Caco-2 (cell line): ENCODE measurements at regions of chr2 and their contacts with region 1.

Region 1: GRCh38 chr2:225002039-225002655 is 40.1 kb downstream of the DOCK10 start:
- DNase-seq: peak in 1 of 2 experiments; percentile 9
- H3K4me3 ChIP-seq: no peak overlapping the region
- H3K4me3 Mint-ChIP-seq: no peak overlapping the region
- H3K27ac Mint-ChIP-seq: no peak overlapping the region
- H3K4me1 ChIP-seq: no peaks in the 10 kb centered on the region
- H3K4me1 Mint-ChIP-seq: no peaks in the 10 kb centered on the region
- H3K27me3 ChIP-seq: no peaks in the 10 kb centered on the region
- H3K27me3 Mint-ChIP-seq: peaks cover 9% of the 10 kb centered on the region
- CTCF ChIP-seq: peak in 1 of 2 experiments; percentile 31

Region 2: GRCh38 chr2:224221455-224221913 is 780.7 kb before region 1 on chr2:
- CTCF ChIA-PET with region 1: no interaction called
- POLR2A ChIA-PET with region 1: no interaction called
- intact Hi-C with region 1: no loop called
- DNase-seq: no peak
- H3K4me3 ChIP-seq: no peak overlapping the region
- H3K4me3 Mint-ChIP-seq: no peak overlapping the region
- H3K27ac Mint-ChIP-seq: no peak overlapping the region
- H3K4me1 ChIP-seq: no peaks in the 10 kb centered on the region
- H3K4me1 Mint-ChIP-seq: no peaks in the 10 kb centered on the region
- H3K27me3 ChIP-seq: no peaks in the 10 kb centered on the region
- H3K27me3 Mint-ChIP-seq: peaks cover 11% of the 10 kb centered on the region
- CTCF ChIP-seq: no peak

Region 3: GRCh38 chr2:224469374-224469964 is 532.7 kb before region 1 on chr2:
- CTCF ChIA-PET with region 1: no interaction called
- POLR2A ChIA-PET with region 1: interaction called, 14 read pairs
- intact Hi-C with region 1: no loop called
- DNase-seq: no peak
- H3K4me3 ChIP-seq: no peak overlapping the region
- H3K4me3 Mint-ChIP-seq: no peak overlapping the region
- H3K27ac Mint-ChIP-seq: no peak overlapping the region
- H3K4me1 ChIP-seq: no peaks in the 10 kb centered on the region
- H3K4me1 Mint-ChIP-seq: no peaks in the 10 kb centered on the region
- H3K27me3 ChIP-seq: no peaks in the 10 kb centered on the region
- H3K27me3 Mint-ChIP-seq: peaks cover 2% of the 10 kb centered on the region
- CTCF ChIP-seq: no peak

Region 4: DNA sequence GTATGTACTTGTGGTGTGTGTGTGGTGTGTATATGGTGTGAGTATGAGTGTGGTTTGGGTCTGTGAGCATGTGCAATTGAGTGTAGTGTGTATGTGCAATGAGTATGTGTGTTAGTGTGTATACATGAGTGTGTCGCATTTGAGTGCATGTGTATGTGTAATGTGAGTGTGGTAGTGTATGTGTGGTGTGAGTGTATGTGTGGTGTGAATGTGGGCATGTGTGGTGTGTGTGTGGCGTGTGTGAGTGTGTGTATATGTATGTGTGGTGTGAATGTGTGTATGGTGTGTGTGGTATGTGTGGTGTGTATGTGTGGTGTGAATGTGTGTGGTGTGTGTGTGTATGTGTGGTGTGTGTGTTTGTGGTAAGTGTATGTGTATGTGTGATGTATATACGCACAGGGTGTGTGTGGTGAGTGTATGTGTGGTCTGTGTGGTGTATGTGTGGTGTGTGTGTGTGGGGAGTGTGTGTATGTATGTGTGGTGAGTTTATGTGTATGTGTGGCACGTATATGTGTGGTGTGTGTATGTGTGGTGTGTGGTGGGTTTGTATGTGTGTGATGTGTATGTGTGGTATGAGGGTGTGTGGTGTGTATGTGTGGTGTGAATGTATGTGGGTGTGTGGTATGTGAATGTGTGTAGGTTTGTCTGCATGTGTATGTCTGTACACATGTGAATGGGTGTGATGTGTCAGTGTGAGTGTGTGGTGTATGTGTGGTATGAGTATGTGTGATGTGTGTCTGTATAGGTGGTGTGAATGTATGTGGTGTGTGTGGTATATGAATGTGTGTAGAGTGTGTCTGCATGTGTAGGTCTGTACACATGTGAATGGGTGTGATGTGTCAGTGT is 83.3 kb before region 1 on chr2:
- CTCF ChIA-PET with region 1: no interaction called
- POLR2A ChIA-PET with region 1: no interaction called
- intact Hi-C with region 1: no loop called
- DNase-seq: no peak
- H3K4me3 ChIP-seq: no peak overlapping the region
- H3K4me3 Mint-ChIP-seq: no peak overlapping the region
- H3K27ac Mint-ChIP-seq: no peak overlapping the region
- H3K4me1 ChIP-seq: no peaks in the 10 kb centered on the region
- H3K4me1 Mint-ChIP-seq: no peaks in the 10 kb centered on the region
- H3K27me3 ChIP-seq: no peaks in the 10 kb centered on the region
- H3K27me3 Mint-ChIP-seq: no peaks in the 10 kb centered on the region
- CTCF ChIP-seq: no peak

Region 5: GRCh38 chr2:224930990-224931389 is 71.2 kb before region 1 on chr2:
- CTCF ChIA-PET with region 1: no interaction called
- POLR2A ChIA-PET with region 1: no interaction called
- intact Hi-C with region 1: loop called (anchors 2 kb)
- DNase-seq: no peak
- H3K4me3 ChIP-seq: no peak overlapping the region
- H3K4me3 Mint-ChIP-seq: no peak overlapping the region
- H3K27ac Mint-ChIP-seq: no peak overlapping the region
- H3K4me1 ChIP-seq: no peaks in the 10 kb centered on the region
- H3K4me1 Mint-ChIP-seq: no peaks in the 10 kb centered on the region
- H3K27me3 ChIP-seq: no peaks in the 10 kb centered on the region
- H3K27me3 Mint-ChIP-seq: peaks cover 9% of the 10 kb centered on the region
- CTCF ChIP-seq: peak in 1 of 2 experiments; percentile 2